Natural killer cell (primary cell): ENCODE measurements at regions of chr4 and their contacts with region 1.

Region 1: DNA sequence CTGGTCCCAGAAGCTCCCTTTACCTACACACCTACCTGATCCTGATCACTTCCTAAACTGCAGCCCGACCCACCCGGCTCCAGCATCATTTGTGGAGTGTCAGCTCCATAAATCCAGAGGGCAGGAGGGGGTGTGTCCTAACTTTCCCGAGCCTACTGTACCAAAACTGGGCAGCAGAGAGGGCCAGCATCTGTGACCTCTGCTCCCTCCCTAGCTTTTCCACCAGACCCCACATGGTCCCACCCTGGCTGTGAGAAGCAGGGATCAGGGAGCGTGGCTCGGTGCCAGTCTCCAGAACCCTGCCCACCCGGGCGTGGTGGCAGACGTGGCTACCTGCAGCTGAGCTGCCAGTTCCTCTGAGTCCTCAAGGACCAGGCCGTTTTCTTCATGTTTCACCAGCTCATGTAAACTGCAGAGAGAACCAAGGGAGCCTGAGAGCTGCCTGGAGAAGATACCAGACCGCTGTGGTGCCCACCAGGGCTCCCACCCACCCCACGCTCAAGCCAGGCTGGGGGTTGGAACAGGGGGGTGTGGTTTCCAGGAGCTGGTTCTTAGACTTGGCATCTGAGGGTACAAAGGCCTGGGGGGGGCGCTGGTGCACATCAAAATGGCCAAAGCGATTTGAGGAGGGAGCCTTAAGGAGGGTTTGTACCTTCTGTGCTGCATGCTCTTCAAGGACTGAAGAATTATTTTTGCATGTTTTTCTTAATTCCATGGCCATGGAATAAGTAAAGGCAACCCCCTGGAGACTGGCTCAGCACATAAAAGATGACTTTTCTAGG is 76.7 kb upstream of the DRD5 start:
- DNase-seq: no peak
- ATAC-seq: no peak
- H3K4me3 ChIP-seq: no peak overlapping the region
- H3K4me3 Mint-ChIP-seq: no peak overlapping the region
- H3K27ac ChIP-seq: no peak overlapping the region
- H3K27ac Mint-ChIP-seq: no peak overlapping the region
- H3K4me1 ChIP-seq: peaks cover 7% of the 10 kb centered on the region
- H3K4me1 Mint-ChIP-seq: peaks cover 10 to 17% of the 10 kb centered on the region in 2 donors
- H3K27me3 ChIP-seq: no peaks in the 10 kb centered on the region
- H3K27me3 Mint-ChIP-seq: peaks cover 0 to 3% of the 10 kb centered on the region in 2 donors
- CTCF ChIP-seq: no peak

Region 2: GRCh38 chr4:10018818-10019461 is 314.2 kb after region 1 on chr4:
- intact Hi-C with region 1: loop called (anchors 10 kb)
- DNase-seq: peak; percentile 90 to 94
- ATAC-seq: peak; percentile 97 to 99 (median 98)
- H3K4me3 ChIP-seq: peak overlapping the region; percentile 58
- H3K4me3 Mint-ChIP-seq: peak overlapping the region; percentile 91
- H3K27ac ChIP-seq: peak overlapping the region; percentile 83
- H3K27ac Mint-ChIP-seq: peak overlapping the region; percentile 89 to 94
- H3K4me1 ChIP-seq: peaks cover 36% of the 10 kb centered on the region
- H3K4me1 Mint-ChIP-seq: peaks cover 13 to 18% of the 10 kb centered on the region in 2 donors
- H3K27me3 ChIP-seq: no peaks in the 10 kb centered on the region
- H3K27me3 Mint-ChIP-seq: peaks cover 0 to 4% of the 10 kb centered on the region in 2 donors
- CTCF ChIP-seq: peak; percentile 100

Region 3: DNA sequence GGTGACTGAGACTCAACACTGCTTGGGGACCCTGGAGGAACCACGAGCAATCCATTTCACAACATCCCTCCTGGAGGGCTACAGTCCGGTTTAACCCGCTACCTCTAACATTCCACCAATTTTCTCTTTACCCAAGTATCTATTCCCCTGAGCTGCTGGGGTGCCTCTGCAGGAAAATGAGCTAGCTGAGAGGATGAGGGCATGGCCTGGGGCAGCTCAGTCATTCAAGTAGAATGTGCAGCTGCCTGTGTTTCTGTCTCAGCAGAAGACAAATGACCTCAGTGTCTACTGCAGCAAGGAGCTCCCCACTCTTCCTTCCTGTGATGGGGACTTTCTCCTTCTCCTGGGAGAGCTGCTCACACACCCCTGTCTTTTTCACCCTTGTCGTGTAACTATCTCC is 631.7 kb after region 1 on chr4:
- intact Hi-C with region 1: no loop called
- DNase-seq: no peak
- ATAC-seq: no peak
- H3K4me3 ChIP-seq: no peak overlapping the region
- H3K4me3 Mint-ChIP-seq: no peak overlapping the region
- H3K27ac ChIP-seq: no peak overlapping the region
- H3K27ac Mint-ChIP-seq: no peak overlapping the region
- H3K4me1 ChIP-seq: no peaks in the 10 kb centered on the region
- H3K4me1 Mint-ChIP-seq: no peaks in the 10 kb centered on the region
- H3K27me3 ChIP-seq: peaks cover 2% of the 10 kb centered on the region
- H3K27me3 Mint-ChIP-seq: peaks cover 6 to 41% of the 10 kb centered on the region in 2 donors
- CTCF ChIP-seq: no peak

Region 4: DNA sequence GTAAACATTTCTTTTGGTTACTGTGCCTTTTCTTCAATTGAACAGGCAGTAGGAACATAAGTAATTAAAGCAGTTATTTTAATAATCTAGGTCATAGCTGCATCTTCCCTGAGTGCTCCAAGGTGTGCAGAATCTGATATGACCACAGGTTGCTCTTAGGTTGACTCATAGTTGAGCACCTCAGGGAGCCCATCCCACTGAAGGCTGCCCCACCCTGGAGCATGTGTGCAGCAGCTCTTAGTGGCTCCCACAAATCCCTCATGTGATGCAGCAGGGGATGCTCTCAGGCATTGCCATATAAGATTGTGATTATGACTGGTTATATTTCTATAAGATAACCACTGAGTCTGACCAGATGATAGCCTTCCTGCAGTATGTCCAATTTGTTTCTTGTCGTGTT is 680.2 kb after region 1 on chr4:
- intact Hi-C with region 1: loop called (anchors 5 kb)
- DNase-seq: no peak
- ATAC-seq: no peak
- H3K4me3 ChIP-seq: no peak overlapping the region
- H3K4me3 Mint-ChIP-seq: no peak overlapping the region
- H3K27ac ChIP-seq: no peak overlapping the region
- H3K27ac Mint-ChIP-seq: no peak overlapping the region
- H3K4me1 ChIP-seq: no peaks in the 10 kb centered on the region
- H3K4me1 Mint-ChIP-seq: no peaks in the 10 kb centered on the region
- H3K27me3 ChIP-seq: no peaks in the 10 kb centered on the region
- H3K27me3 Mint-ChIP-seq: peaks cover 7 to 15% of the 10 kb centered on the region in 2 donors
- CTCF ChIP-seq: no peak